ENCODE measurements at regions of chr10 and their contacts with region 1.

Region 1: GRCh38 chr10:122374237-122374869 is at the start of gene PLEKHA1:
- DNase-seq: peak; percentile 97
- H3K4me3 ChIP-seq: peak within 1 kb of the TSS; percentile 69 to 97 (median 94)
- H3K27ac ChIP-seq: peak within 1 kb of the TSS; percentile 98 to 100 (median 98)
- H3K4me1 ChIP-seq: peaks cover 0 to 61% (median 45%) of the 10 kb centered on the region in 4 donors
- H3K27me3 ChIP-seq: no peaks in the 10 kb centered on the region
- CTCF ChIP-seq: no peak
- EP300 ChIP-seq: no peak
- POLR2A ChIP-seq: no peak
- total RNA-seq, gene PLEKHA1: 34.1 to 53.2 (median 50.4) TPM

Region 2: DNA sequence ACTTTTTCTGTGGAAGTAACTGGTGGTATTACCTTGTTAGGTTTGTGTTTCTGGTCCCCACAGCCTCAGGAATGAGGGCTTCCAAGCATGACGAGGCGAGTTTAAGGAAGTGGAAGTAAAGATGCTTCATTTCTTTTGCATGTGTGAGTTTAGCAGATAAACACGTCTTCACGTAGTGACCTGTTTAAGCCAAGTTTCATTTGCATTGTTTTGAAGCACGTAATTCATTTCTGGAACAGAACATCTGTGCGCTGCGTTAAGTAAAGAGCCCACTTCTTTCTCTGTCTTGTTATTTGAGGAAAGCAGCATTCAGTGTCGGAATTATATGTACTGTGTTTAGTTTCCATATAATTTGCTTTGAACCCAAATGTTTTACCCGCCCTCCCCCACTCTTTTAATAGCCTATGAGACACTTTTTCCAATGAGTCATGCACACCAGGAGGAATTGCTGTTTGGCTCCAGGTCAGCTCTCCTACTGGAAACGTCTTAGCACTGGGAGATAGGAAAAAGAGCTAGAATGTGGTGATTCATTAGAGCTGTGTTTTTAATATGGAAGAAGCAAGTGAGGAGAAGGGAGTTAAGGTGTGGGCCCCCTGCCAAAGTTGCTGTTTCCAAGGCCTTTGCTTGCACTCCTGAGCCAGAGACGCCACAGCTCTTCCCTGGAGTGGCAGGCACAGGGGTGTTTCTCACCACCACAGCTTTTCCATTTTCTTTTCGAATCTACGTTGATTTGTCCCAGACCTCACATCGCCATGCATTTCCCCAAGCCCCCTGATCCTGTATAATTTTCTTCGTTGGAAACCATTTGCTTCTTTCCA is 66.5 kb before region 1 on chr10:
- intact Hi-C with region 1: loop called (anchors 2 kb)
- DNase-seq: peak; percentile 95
- H3K4me3 ChIP-seq: peak overlapping the region in 3 of 4 donors; percentile 12 to 23 (median 22)
- H3K27ac ChIP-seq: peak overlapping the region; percentile 77 to 94 (median 89)
- H3K4me1 ChIP-seq: peaks cover 0 to 50% (median 40%) of the 10 kb centered on the region in 4 donors
- H3K27me3 ChIP-seq: no peaks in the 10 kb centered on the region
- CTCF ChIP-seq: no peak
- EP300 ChIP-seq: peak; percentile 79 to 96 (median 92)
- POLR2A ChIP-seq: no peak

Region 3: DNA sequence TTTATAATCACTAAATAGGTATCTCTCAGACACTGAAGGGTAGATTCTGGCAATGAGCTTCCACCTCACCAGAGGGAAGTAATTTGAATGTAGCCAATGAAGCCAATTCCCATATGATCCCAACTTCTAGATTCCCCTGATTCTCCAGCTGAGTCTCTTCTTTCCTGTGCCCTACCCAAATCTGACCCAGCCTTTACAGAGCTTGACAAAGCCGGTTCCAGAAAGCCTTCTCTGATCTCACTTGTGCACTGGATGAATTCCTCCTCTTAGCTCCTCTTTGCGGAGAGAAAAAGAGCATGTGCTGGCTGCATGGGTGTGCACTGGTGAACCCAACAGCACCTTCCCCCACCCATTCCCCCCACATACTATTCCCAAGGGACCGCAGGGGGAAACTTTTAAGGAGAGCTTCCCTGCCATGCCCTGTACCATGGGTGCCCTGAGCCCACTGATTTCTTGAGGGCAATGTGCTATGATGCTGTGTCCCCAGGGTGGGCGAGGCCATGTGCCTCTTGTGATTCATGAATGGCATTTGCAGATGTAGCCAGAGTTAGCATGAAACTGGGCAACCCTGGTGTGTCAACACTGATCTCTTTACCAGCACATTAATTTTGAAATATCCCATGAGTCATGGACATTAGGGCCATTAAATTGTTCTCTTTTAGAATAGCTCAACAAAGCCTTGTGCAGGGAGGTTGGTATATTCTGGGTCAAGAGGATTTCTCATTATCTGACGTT is 50.2 kb before region 1 on chr10:
- intact Hi-C with region 1: no loop called
- DNase-seq: no peak
- H3K4me3 ChIP-seq: no peak overlapping the region
- H3K27ac ChIP-seq: no peak overlapping the region
- H3K4me1 ChIP-seq: no peaks in the 10 kb centered on the region
- H3K27me3 ChIP-seq: no peaks in the 10 kb centered on the region
- CTCF ChIP-seq: no peak
- EP300 ChIP-seq: no peak
- POLR2A ChIP-seq: no peak

Region 4: DNA sequence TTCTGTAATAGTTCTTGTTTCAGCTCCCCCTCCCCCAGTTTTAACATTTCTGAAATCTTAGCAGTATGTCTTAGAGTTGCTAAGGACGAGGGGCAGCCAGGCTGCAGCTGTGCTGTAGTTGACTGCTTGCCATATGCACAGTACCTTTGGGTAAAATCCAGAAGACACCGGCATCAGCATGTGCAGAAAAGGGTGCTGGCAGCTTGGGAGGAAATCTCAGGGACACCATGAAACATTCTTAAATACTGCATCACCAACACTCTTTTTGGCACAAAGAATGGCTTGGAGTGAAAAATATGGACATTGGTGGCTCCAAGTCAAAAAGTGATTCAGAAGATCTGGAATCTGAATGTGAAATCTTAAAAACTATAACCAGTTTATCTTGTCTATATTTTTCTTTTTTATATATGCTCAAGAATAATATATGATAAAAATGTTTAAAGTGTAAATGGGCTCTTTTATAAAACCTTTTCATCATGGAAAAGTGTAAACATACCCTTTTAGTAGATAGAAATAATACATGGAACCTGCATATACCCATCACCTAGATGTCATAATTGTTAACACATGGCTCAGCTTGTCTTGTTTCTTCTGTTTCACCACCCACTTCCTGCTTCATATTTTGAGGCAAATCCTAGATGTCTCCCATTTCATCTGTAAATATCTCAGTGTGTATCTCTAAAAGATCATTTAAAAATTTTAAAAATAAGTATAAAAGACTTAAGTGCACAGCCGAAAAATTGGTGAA is 45.7 kb after region 1 on chr10:
- intact Hi-C with region 1: loop called (anchors 5 kb)
- DNase-seq: peak; percentile 63
- H3K4me3 ChIP-seq: no peak overlapping the region
- H3K27ac ChIP-seq: peak overlapping the region; percentile 3 to 77 (median 64)
- H3K4me1 ChIP-seq: peaks cover 0 to 72% (median 48%) of the 10 kb centered on the region in 4 donors
- H3K27me3 ChIP-seq: no peaks in the 10 kb centered on the region
- CTCF ChIP-seq: no peak
- EP300 ChIP-seq: no peak
- POLR2A ChIP-seq: no peak

Region 5: DNA sequence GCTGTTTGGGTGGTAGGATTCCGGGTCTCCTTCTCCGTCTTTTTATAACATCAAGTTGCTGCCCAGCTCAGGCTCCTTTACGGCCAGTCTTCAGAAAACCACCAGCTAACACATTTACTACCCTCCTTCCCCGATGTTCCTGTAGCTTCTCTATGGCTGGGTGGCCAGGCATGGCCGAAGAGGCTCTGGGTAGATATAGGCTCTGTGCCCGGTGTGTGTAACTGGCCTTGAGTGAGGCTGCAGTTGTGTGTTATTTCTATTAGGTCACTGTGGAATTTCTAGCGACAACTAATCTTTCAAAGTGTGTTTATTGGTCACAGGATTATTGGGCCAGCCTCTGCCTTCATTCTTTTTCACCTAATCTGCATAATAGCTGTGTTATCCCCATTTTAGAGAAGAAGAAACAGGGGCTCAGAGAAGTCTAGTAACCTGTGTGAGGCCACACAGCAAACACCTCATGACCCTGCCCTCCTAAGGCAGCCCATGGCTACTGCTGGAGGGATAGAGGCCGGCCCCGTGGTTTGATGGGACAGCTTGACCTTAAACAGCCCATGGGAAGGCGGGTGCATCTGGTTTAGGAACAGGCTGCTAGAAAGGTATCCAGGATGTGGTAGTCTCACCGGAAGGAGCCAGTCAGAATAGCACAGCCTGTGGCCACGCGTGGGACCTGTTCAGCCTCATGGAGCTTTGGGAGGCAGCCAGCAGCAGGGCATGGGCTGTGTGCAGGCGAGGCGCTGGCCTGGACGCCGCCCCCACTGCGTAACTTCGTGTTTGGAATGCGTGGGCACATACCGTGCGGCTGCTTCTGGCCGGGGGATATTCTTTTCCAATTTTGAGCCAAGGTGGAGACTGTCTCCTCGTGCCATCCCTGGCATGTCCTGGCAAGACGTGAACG is 116.7 kb after region 1 on chr10:
- intact Hi-C with region 1: loop called (anchors 5 kb)
- DNase-seq: peak; percentile 83
- H3K4me3 ChIP-seq: no peak overlapping the region
- H3K27ac ChIP-seq: peak overlapping the region in 3 of 4 donors; percentile 65 to 87 (median 74)
- H3K4me1 ChIP-seq: peaks cover 0 to 85% (median 83%) of the 10 kb centered on the region in 4 donors
- H3K27me3 ChIP-seq: no peaks in the 10 kb centered on the region
- CTCF ChIP-seq: no peak
- EP300 ChIP-seq: peak in 1 of 4 donors; percentile 89
- POLR2A ChIP-seq: no peak

Region 6: GRCh38 chr10:123249894-123250293 is 875.5 kb after region 1 on chr10:
- intact Hi-C with region 1: no loop called
- DNase-seq: no peak
- H3K4me3 ChIP-seq: no peak overlapping the region
- H3K27ac ChIP-seq: no peak overlapping the region
- H3K4me1 ChIP-seq: no peaks in the 10 kb centered on the region
- H3K27me3 ChIP-seq: no peaks in the 10 kb centered on the region
- CTCF ChIP-seq: no peak
- EP300 ChIP-seq: no peak
- POLR2A ChIP-seq: no peak

Measured in sigmoid colon (tissue), 7 donors.